Kidney (tissue), 22 donors: ENCODE measurements at regions of chr10 and their contacts with region 1.

Region 1: DNA sequence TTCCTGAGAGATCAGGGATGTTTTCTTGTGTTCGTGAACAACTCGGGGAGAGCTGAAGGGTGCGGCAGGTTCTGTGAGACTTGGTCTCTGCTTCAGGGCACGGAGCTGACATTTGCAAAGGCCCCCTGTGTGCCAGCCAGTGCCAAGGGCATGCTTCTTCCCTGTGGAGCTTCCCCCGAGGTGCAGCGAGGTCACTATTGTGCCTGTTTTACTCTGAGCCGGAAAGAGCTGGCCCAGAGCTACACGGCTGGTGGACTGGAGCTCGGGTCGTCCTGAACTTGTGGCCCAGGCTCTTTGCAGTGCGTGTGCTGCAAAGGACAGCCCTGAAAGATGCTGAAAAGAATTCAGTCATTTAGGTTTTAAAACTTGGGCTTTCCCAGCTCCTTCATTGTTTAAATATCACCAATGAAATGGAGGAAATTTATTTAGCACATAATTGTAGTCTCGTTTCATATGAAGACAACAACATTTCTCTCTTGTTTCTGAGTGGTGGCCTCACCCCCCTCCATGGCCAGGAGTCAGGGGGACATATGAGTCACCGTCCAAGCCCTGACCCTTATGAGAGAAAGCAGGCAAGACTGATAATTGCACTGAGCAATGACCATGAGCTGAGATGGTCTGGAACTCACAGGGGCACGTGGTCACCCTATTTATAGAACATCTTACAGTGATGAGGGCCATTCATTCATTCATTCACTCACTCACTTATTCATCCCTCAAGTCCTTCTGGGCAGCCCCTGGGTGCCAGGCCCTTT is 102.6 kb downstream of the PTPRE start:
- DNase-seq: no peak
- H3K4me3 ChIP-seq: no peak overlapping the region
- H3K27ac ChIP-seq: no peak overlapping the region
- H3K4me1 ChIP-seq: peaks cover 0 to 2% (median 0%) of the 10 kb centered on the region in 3 donors
- H3K27me3 ChIP-seq: no peaks in the 10 kb centered on the region
- CTCF ChIP-seq: no peak

Region 2: GRCh38 chr10:127906548-127907377 is 102.8 kb before region 1 on chr10 and contains the start of gene PTPRE:
- intact Hi-C with region 1: loop called (anchors 5 kb)
- DNase-seq: peak; percentile 58 to 89 (median 72)
- H3K4me3 ChIP-seq: peak within 1 kb of the TSS in 2 of 3 donors; percentile 3 to 55
- H3K27ac ChIP-seq: no peak within 1 kb of the TSS
- H3K4me1 ChIP-seq: peaks cover 0 to 8% (median 0%) of the 10 kb centered on the region in 3 donors
- H3K27me3 ChIP-seq: no peaks in the 10 kb centered on the region
- CTCF ChIP-seq: peak; percentile 67
- total RNA-seq, gene PTPRE: 25.7 TPM